Right ventricle myocardium inferior (tissue), 1 donor: ENCODE measurements at regions of chr6 and their contacts with region 1.

Region 1: GRCh38 chr6:39062014-39062740 is 13.6 kb downstream of the GLP1R start:
- DNase-seq: no peak
- ATAC-seq: peak; percentile 75

Region 2: DNA sequence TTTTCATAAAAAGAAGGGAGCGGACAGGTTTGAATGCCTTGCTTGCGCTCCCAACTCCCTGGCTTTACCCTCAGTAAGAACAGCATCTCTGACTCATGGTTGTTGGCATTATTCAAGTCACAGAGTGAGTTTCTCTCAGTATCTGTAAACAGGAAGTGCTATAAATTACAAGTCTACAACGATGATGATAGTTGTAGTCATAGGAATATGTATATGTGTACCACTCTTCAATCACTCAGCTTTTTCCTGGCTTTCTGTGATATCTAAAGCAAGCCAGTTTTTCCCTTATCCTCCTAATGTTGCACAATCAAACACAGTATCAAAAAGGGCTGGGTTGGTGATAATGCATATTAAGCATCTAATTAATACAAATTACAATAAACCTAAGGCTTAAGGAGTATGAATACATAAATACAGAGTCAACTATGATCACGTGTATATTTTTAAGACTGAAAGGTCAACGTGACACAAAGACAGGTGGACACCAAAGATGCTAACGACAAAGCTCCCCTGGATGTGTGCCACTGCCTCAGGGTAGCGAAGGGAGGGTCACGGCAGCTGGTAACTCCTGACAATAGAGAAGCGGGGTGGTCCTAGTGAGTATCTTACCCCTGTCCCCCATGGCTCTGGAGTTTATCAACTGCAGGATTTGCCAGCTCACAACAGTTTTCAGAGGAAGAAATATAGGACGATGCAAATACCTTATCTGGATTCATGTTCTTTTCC is 625.3 kb before region 1 on chr6:
- intact Hi-C with region 1: no loop called
- DNase-seq: no peak
- ATAC-seq: no peak

Region 3: GRCh38 chr6:38797391-38797790 is 264.8 kb before region 1 on chr6:
- intact Hi-C with region 1: no loop called
- DNase-seq: no peak
- ATAC-seq: no peak

Region 4: DNA sequence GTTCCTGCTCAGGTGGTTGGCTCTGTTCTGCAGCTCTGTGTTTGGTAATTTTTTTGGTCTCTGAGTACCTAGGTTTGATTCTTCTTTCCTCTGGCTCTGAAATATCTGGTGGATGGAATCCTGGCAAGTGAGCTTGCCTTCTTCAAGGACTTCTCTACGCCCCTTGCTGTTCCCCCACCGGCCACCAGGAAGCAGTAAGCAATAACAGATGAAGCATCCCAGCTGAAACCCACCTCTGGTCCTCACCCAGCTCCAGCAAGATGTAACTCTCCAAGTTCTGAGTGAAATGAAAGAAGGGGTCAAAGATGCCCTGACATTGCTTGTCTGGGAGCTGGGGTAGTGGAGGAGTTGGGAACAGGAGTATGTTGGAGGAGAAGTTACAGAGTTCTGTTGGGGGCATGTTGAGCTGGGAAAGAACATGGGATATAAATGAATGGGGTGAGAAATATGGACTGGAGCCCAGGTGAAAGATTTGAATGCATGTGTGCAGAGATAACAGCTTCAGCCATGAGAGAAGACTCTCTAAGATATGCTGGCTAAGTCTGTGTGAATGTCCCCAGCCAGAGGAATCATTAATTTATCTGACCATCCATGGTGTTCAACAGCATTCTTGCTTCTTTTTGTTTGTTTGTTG is 64.9 kb before region 1 on chr6:
- intact Hi-C with region 1: loop called (anchors 10 kb)
- DNase-seq: no peak
- ATAC-seq: peak; percentile 55